CD14-positive monocyte (primary cell): ENCODE measurements at regions of chr17 and their contacts with region 1.

Region 1: GRCh38 chr17:67421869-67422273 is 44.8 kb downstream of the PITPNC1 start:
- DNase-seq: peak; percentile 84 to 97 (median 91)
- H3K4me3 ChIP-seq: no peak overlapping the region
- H3K4me3 Mint-ChIP-seq: no peak overlapping the region
- H3K27ac ChIP-seq: peak overlapping the region; percentile 57 to 63
- H3K27ac Mint-ChIP-seq: peak overlapping the region; percentile 66 to 90 (median 80)
- H3K4me1 ChIP-seq: peaks cover 22 to 31% of the 10 kb centered on the region in 2 donors
- H3K4me1 Mint-ChIP-seq: peaks cover 45% of the 10 kb centered on the region
- H3K27me3 ChIP-seq: no peaks in the 10 kb centered on the region
- H3K27me3 Mint-ChIP-seq: peaks cover 0 to under 1% (median 0%) of the 10 kb centered on the region in 3 donors
- CTCF ChIP-seq: no peak

Region 2: GRCh38 chr17:67322042-67322787 is 99.7 kb before region 1 on chr17:
- intact Hi-C with region 1: no loop called
- DNase-seq: no peak
- H3K4me3 ChIP-seq: no peak overlapping the region
- H3K4me3 Mint-ChIP-seq: no peak overlapping the region
- H3K27ac ChIP-seq: no peak overlapping the region
- H3K27ac Mint-ChIP-seq: no peak overlapping the region
- H3K4me1 ChIP-seq: no peaks in the 10 kb centered on the region
- H3K4me1 Mint-ChIP-seq: peaks cover 3% of the 10 kb centered on the region
- H3K27me3 ChIP-seq: no peaks in the 10 kb centered on the region
- H3K27me3 Mint-ChIP-seq: peaks cover 0 to 5% (median 2%) of the 10 kb centered on the region in 3 donors
- CTCF ChIP-seq: no peak

Region 3: GRCh38 chr17:67411397-67411796 is 10.5 kb before region 1 on chr17:
- intact Hi-C with region 1: loop called in 1 of 2 experiments (anchors 1 kb)
- DNase-seq: peak; percentile 74 to 88 (median 79)
- H3K4me3 ChIP-seq: no peak overlapping the region
- H3K4me3 Mint-ChIP-seq: no peak overlapping the region
- H3K27ac ChIP-seq: peak overlapping the region; percentile 28
- H3K27ac Mint-ChIP-seq: peak overlapping the region; percentile 35 to 80 (median 53)
- H3K4me1 ChIP-seq: peaks cover 15 to 17% of the 10 kb centered on the region in 2 donors
- H3K4me1 Mint-ChIP-seq: peaks cover 21% of the 10 kb centered on the region
- H3K27me3 ChIP-seq: no peaks in the 10 kb centered on the region
- H3K27me3 Mint-ChIP-seq: peaks cover 0 to 2% (median 0%) of the 10 kb centered on the region in 3 donors
- CTCF ChIP-seq: no peak